PC-9 (cell line): ENCODE measurements at regions of chr9 and their contacts with region 1.

Region 1: DNA sequence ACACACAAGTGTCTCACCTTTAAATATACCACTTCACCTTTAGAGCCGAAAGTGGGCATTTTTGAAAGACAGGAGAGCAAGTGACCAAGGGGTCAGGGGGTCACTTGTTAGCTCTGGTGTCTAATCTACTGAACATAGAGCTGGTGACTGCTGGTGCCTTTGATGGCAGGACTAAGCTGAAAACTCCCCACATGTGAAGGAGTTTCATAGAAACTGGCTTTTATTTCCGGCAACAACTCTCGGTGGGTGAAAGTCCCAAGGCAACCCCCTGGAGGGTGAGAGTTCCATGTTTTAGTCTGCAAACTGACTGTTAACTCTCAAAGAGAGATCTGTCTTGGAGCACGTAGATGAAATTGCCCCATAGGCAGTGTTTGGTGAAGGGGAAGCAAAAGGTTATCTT is 466.9 kb downstream of the DMRTA1 start:
- DNase-seq: no peak
- H3K4me3 ChIP-seq: no peak overlapping the region
- H3K27ac ChIP-seq: no peak overlapping the region
- H3K4me1 ChIP-seq: no peaks in the 10 kb centered on the region
- H3K27me3 ChIP-seq: no peaks in the 10 kb centered on the region
- CTCF ChIP-seq: no peak

Region 2: DNA sequence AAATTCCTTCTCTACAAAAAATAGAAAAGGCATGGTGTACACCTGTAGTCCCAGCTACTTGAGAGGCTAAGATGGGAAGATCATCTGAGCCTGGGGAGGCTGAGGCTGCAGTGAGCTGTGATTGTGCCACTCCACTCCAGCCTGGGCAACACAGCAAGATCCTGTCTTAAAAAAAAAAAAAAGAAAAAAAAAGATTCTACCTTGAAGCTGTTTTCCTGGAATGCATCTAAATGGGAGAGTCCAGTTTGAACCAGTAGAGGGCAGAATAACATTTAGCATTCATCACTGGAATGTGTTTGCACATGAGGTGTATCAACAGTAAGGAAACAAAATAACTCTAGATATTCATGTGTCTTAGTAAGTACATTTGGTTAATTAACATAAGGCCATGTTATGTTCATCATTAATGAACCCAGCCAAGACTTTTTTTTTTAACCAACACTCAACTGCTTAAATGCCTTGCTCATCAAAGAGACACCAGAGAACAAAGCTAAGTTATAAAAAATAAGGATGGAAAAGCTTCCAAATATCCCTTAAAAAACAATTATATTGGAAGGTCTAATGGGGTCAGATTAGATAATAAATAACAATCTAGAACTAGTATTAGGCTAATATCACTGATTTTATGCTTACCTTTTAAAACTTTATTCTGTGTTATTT is 1447.5 kb before region 1 on chr9:
- CTCF ChIA-PET with region 1: no interaction called
- POLR2A ChIA-PET with region 1: interaction called, 10 read pairs
- intact Hi-C with region 1: no loop called
- DNase-seq: peak; percentile 4 to 51
- H3K4me3 ChIP-seq: no peak overlapping the region
- H3K27ac ChIP-seq: no peak overlapping the region
- H3K4me1 ChIP-seq: no peaks in the 10 kb centered on the region
- H3K27me3 ChIP-seq: no peaks in the 10 kb centered on the region
- CTCF ChIP-seq: peak; percentile 71

Region 3: GRCh38 chr9:22773501-22774220 is 139.9 kb before region 1 on chr9:
- CTCF ChIA-PET with region 1: no interaction called
- POLR2A ChIA-PET with region 1: no interaction called
- intact Hi-C with region 1: no loop called
- DNase-seq: no peak
- H3K4me3 ChIP-seq: no peak overlapping the region
- H3K27ac ChIP-seq: no peak overlapping the region
- H3K4me1 ChIP-seq: no peaks in the 10 kb centered on the region
- H3K27me3 ChIP-seq: no peaks in the 10 kb centered on the region
- CTCF ChIP-seq: no peak

Region 4: GRCh38 chr9:22840641-22841040 is 72.9 kb before region 1 on chr9:
- CTCF ChIA-PET with region 1: no interaction called
- POLR2A ChIA-PET with region 1: no interaction called
- intact Hi-C with region 1: no loop called
- DNase-seq: no peak
- H3K4me3 ChIP-seq: no peak overlapping the region
- H3K27ac ChIP-seq: no peak overlapping the region
- H3K4me1 ChIP-seq: no peaks in the 10 kb centered on the region
- H3K27me3 ChIP-seq: no peaks in the 10 kb centered on the region
- CTCF ChIP-seq: no peak

Region 5: GRCh38 chr9:22898591-22898990 is 14.9 kb before region 1 on chr9:
- CTCF ChIA-PET with region 1: no interaction called
- POLR2A ChIA-PET with region 1: no interaction called
- intact Hi-C with region 1: no loop called
- DNase-seq: no peak
- H3K4me3 ChIP-seq: no peak overlapping the region
- H3K27ac ChIP-seq: no peak overlapping the region
- H3K4me1 ChIP-seq: no peaks in the 10 kb centered on the region
- H3K27me3 ChIP-seq: no peaks in the 10 kb centered on the region
- CTCF ChIP-seq: no peak

Region 6: DNA sequence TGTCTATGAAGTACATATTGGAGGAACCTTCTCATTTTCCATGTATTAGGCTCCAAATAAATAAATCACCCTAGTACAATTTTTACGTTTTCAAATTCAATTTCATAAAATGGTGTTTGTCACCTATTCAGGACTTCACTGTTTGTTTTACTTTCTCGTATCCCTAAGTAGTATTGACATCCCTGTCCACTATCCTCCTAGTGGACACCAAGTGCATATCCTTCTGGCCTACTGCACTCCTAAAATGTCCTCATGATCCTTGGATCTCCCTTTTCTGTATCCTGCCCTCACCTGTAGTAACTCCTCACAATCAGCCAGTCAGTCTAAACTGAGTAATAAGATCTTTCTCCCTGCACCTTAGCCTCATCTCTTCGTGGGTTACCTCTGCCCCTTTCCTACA is 73.0 kb after region 1 on chr9:
- CTCF ChIA-PET with region 1: no interaction called
- POLR2A ChIA-PET with region 1: no interaction called
- intact Hi-C with region 1: no loop called
- DNase-seq: no peak
- H3K4me3 ChIP-seq: no peak overlapping the region
- H3K27ac ChIP-seq: no peak overlapping the region
- H3K4me1 ChIP-seq: no peaks in the 10 kb centered on the region
- H3K27me3 ChIP-seq: no peaks in the 10 kb centered on the region
- CTCF ChIP-seq: no peak